IMR-90 (cell line): ENCODE measurements at regions of chrX and their contacts with region 1.

Region 1: GRCh38 chrX:12138361-12139313 is at the start of gene FRMPD4:
- DNase-seq: peak; percentile 24
- ATAC-seq: peak; percentile 72
- H3K4me3 ChIP-seq: peak within 1 kb of the TSS; percentile 61
- H3K27ac ChIP-seq: no peak within 1 kb of the TSS; the same call in 1 of the 2 replicates
- H3K4me1 ChIP-seq: peaks cover 2% of the 10 kb centered on the region; the same call in 1 of the 2 replicates
- H3K27me3 ChIP-seq: peaks cover 2% of the 10 kb centered on the region; the same call in 1 of the 2 replicates
- CTCF ChIP-seq: peak; percentile 34
- POLR2A ChIP-seq: no peak
- RAD21 ChIP-seq: peak; percentile 46
- total RNA-seq, gene FRMPD4: 1.1 TPM in 2 replicates

Region 2: GRCh38 chrX:12021698-12022097 is 116.9 kb before region 1 on chrX:
- CTCF ChIA-PET with region 1: no interaction called
- POLR2A ChIA-PET with region 1: no interaction called
- dilution Hi-C with region 1: no loop called
- in situ Hi-C with region 1: no loop called
- intact Hi-C with region 1: no loop called
- DNase-seq: no peak
- ATAC-seq: no peak
- H3K4me3 ChIP-seq: no peak overlapping the region
- H3K27ac ChIP-seq: no peak overlapping the region
- H3K4me1 ChIP-seq: no peaks in the 10 kb centered on the region
- H3K27me3 ChIP-seq: no peaks in the 10 kb centered on the region
- CTCF ChIP-seq: no peak
- POLR2A ChIP-seq: no peak
- RAD21 ChIP-seq: no peak

Region 3: DNA sequence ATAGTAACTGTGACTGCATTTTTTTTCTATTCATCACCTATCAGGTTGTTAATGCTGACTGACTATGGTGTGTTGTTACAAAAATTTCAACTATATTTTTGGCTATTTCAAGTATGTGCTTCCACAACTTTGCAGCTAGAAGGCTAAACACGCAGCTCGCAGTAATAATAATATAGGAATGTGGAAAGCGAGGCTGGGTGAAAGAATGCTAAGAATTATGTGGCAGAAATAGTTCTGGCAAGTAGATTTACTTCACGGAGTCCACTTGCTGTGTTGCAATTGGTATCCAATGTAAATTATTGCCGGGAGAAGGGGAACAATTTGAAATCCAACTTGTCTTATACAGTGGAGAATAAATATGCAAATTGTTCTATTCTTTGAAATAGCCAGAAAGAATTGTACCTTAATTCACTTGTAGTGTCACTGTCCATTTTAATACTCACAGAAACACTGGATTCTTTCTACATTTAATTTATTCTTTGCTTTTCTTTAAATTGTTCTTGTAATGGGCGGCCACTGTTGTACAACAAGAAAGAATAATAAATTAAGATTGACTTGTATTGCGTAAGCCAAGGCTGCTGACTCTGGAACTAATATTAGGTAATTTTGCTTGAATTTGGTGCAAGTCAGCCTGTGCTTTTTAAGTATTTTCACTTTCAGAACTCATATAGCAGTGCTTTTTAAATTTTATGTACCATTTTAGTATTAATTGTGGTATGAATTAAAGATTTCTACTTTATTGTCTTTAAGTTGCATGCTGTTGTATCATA is 154.5 kb after region 1 on chrX:
- CTCF ChIA-PET with region 1: no interaction called
- POLR2A ChIA-PET with region 1: no interaction called
- dilution Hi-C with region 1: no loop called
- in situ Hi-C with region 1: no loop called
- intact Hi-C with region 1: loop called (anchors 10 kb)
- DNase-seq: peak; percentile 75
- ATAC-seq: peak; percentile 71
- H3K4me3 ChIP-seq: no peak overlapping the region
- H3K27ac ChIP-seq: peak overlapping the region; percentile 71; the same call in 1 of the 2 replicates
- H3K4me1 ChIP-seq: peaks cover 10% of the 10 kb centered on the region; the same call in 1 of the 2 replicates
- H3K27me3 ChIP-seq: no peaks in the 10 kb centered on the region
- CTCF ChIP-seq: no peak
- POLR2A ChIP-seq: no peak
- RAD21 ChIP-seq: no peak

Region 4: GRCh38 chrX:12447448-12448064 is 308.9 kb after region 1 on chrX:
- CTCF ChIA-PET with region 1: no interaction called
- POLR2A ChIA-PET with region 1: no interaction called
- dilution Hi-C with region 1: no loop called
- in situ Hi-C with region 1: no loop called
- intact Hi-C with region 1: loop called (anchors 1 kb)
- DNase-seq: peak; percentile 95
- ATAC-seq: peak; percentile 91
- H3K4me3 ChIP-seq: no peak overlapping the region
- H3K27ac ChIP-seq: peak overlapping the region; percentile 64
- H3K4me1 ChIP-seq: 0 out of 2 replicates have a peak, but pooled peaks cover 1% of the 10 kb centered on the region
- H3K27me3 ChIP-seq: no peaks in the 10 kb centered on the region
- CTCF ChIP-seq: peak; percentile 54
- POLR2A ChIP-seq: no peak
- RAD21 ChIP-seq: peak; percentile 64

Region 5: DNA sequence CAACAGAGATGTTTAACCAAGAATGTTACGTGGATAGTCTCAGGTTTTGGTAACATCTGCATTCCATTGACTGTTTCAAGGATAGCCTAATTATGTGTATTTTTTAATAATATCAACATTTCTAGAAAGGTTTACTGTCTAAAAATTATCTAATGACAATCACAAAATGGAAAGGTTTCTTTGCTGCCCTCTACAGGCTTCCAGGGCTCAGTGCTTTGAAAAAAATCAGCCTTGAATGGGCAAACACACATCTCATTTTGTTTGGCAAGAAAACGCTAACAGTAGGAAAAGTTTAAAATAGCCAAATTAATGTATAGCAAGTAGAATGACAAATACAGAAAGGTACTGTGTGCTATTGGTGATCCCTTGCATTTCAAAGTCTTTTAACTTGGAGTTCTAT is 429.2 kb after region 1 on chrX:
- CTCF ChIA-PET with region 1: interaction called, 4 read pairs
- POLR2A ChIA-PET with region 1: no interaction called
- dilution Hi-C with region 1: no loop called
- in situ Hi-C with region 1: no loop called
- intact Hi-C with region 1: loop called (anchors 10 kb)
- DNase-seq: peak; percentile 13
- ATAC-seq: no peak
- H3K4me3 ChIP-seq: no peak overlapping the region
- H3K27ac ChIP-seq: no peak overlapping the region
- H3K4me1 ChIP-seq: no peaks in the 10 kb centered on the region
- H3K27me3 ChIP-seq: no peaks in the 10 kb centered on the region
- CTCF ChIP-seq: peak; percentile 62
- POLR2A ChIP-seq: no peak
- RAD21 ChIP-seq: peak; percentile 49